ENCODE measurements at regions of chr18 and their contacts with region 1.

Region 1: GRCh38 chr18:3447895-3448837 is 1.8 kb upstream of the TGIF1 start:
- DNase-seq: peak; percentile 81
- H3K4me3 Mint-ChIP-seq: peak overlapping the region; percentile 97
- H3K27ac Mint-ChIP-seq: peak overlapping the region; percentile 100
- H3K4me1 Mint-ChIP-seq: peaks cover 44% of the 10 kb centered on the region
- H3K27me3 Mint-ChIP-seq: peaks cover 2% of the 10 kb centered on the region

Region 2: DNA sequence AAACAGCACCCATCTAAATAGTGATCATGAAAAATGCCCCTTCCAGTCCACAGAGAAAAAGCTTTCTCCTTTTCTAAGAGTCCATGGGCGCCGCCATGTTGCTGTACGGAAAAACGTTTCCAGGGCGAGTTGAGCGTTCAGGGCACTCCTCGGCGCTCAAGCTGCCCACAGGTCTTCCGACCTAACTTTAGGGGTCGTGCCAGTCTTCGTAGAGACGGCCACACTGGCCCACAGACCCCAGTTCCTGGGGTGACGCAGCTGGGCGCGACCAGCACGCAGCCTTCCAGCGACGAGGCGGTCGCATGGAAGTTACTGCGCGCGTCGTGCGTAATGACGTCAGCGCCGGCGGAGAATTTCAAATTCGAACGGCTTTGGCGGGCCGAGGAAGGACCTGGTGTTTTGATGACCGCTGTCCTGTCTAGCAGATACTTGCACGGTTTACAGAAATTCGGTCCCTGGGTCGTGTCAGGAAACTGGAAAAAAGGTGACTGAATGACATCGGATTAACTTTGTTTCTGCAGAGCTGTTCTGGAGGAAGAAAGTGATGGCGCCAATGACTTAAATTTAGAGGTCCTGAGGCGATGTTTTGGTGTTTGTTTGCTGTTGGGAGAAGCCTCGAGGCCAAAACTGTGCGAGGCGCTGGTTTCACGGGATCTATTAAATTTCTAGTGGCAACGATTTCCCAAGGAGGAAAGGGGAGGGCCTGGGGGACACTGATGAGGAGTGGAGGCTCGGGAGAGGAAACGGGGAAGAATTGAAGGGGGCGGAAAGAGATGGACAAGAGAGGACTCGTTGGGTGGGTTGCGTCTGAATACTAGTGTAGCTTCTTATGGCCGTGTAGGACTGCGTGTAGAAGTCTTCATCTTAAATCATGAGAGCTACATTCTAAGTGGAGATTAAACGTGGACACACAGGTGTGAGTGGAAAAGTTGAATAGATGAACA is 876.7 kb before region 1 on chr18 and contains the starts of genes METTL4 and NDC80:
- intact Hi-C with region 1: loop called (anchors 10 kb)
- DNase-seq: peak; percentile 79
- H3K4me3 Mint-ChIP-seq: peak within 1 kb of the TSS; percentile 97
- H3K27ac Mint-ChIP-seq: peak within 1 kb of the TSS; percentile 97
- H3K4me1 Mint-ChIP-seq: peaks cover 66% of the 10 kb centered on the region
- H3K27me3 Mint-ChIP-seq: no peaks in the 10 kb centered on the region
- total RNA-seq, gene METTL4: 15.0 and 26.2 TPM in 2 replicates
- total RNA-seq, gene NDC80: 41.2 and 42.6 TPM in 2 replicates

Region 3: GRCh38 chr18:2958819-2959298 is 489.3 kb before region 1 on chr18:
- intact Hi-C with region 1: loop called (anchors 2 kb)
- DNase-seq: peak; percentile 46
- H3K4me3 Mint-ChIP-seq: peak overlapping the region; percentile 81
- H3K27ac Mint-ChIP-seq: peak overlapping the region; percentile 99
- H3K4me1 Mint-ChIP-seq: peaks cover 93% of the 10 kb centered on the region
- H3K27me3 Mint-ChIP-seq: no peaks in the 10 kb centered on the region

Region 4: GRCh38 chr18:3245853-3246634 is 202.1 kb before region 1 on chr18:
- intact Hi-C with region 1: loop called (anchors 1 kb)
- DNase-seq: peak; percentile 79
- H3K4me3 Mint-ChIP-seq: peak overlapping the region; percentile 93
- H3K27ac Mint-ChIP-seq: peak overlapping the region; percentile 99
- H3K4me1 Mint-ChIP-seq: peaks cover 42% of the 10 kb centered on the region
- H3K27me3 Mint-ChIP-seq: peaks cover 2% of the 10 kb centered on the region

Region 5: GRCh38 chr18:3305354-3305762 is 142.8 kb before region 1 on chr18:
- intact Hi-C with region 1: loop called (anchors 1 kb)
- DNase-seq: peak; percentile 44
- H3K4me3 Mint-ChIP-seq: peak overlapping the region; percentile 3
- H3K27ac Mint-ChIP-seq: peak overlapping the region; percentile 94
- H3K4me1 Mint-ChIP-seq: peaks cover 23% of the 10 kb centered on the region
- H3K27me3 Mint-ChIP-seq: peaks cover 17% of the 10 kb centered on the region

Region 6: GRCh38 chr18:3411854-3412268 is 36.3 kb before region 1 on chr18:
- intact Hi-C with region 1: loop called (anchors 2 kb)
- DNase-seq: no peak
- H3K4me3 Mint-ChIP-seq: peak overlapping the region; percentile 5
- H3K27ac Mint-ChIP-seq: no peak overlapping the region
- H3K4me1 Mint-ChIP-seq: peaks cover 10% of the 10 kb centered on the region
- H3K27me3 Mint-ChIP-seq: no peaks in the 10 kb centered on the region

Region 7: DNA sequence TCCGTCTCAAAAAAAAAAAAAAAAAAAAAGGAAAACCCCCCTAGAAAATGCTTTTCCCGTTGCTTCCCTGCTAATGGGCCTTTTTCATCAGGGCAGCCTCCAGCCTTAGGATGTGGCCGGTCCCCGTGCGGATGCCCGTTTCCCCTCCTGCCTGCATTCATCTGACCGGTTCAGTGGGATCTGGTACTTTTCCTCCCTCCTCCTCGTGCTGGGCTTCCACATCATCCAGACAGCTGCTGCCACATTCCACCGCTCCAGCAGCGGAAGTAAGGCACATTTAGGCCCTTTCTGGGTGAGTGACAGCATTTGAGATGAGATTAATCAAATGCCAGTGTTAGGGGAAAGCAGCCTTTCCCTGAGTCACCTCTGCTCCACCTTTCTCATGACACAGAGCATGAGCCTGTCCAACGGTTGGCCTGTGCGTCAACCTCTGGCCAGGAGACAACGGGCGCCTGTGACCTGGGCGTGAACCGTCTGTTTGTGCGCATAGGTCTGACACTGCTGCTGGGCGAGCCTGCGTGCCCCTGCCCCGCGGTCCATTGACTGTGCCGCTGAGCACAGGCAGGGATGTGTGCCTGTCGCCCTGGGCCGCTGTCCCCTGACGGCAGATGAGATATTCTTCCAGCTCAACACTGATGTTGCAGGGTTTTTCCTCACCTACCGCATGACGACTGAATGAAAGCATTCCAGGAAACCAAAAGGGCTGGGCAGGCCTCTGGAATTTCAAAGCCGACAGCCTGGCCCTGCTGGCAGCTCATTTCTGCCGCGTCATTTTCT is 175.8 kb after region 1 on chr18:
- intact Hi-C with region 1: loop called (anchors 1 kb)
- DNase-seq: no peak
- H3K4me3 Mint-ChIP-seq: peak overlapping the region; percentile 47
- H3K27ac Mint-ChIP-seq: peak overlapping the region; percentile 90
- H3K4me1 Mint-ChIP-seq: peaks cover 42% of the 10 kb centered on the region
- H3K27me3 Mint-ChIP-seq: peaks cover 2% of the 10 kb centered on the region